Activated CD4-positive, alpha-beta T cell treated with anti-CD3 and anti-CD28 coated beads, Interleukin-2, amount 10 ng/mL, durations not matched to agents 24 days and 14 days (primary cell): ENCODE measurements at regions of chr10 and their contacts with region 1.

Region 1: GRCh38 chr10:62816331-62817120 is at the start of gene EGR2:
- DNase-seq: peak; percentile 98
- H3K4me3 Mint-ChIP-seq: peak within 1 kb of the TSS; percentile 97
- H3K27ac Mint-ChIP-seq: peak within 1 kb of the TSS; percentile 100
- H3K4me1 Mint-ChIP-seq: peaks cover 50% of the 10 kb centered on the region
- H3K27me3 Mint-ChIP-seq: peaks cover 30% of the 10 kb centered on the region
- total RNA-seq, gene EGR2: 178 and 201 TPM in 2 replicates

Region 2: GRCh38 chr10:61943674-61944410 is 872.7 kb before region 1 on chr10:
- intact Hi-C with region 1: loop called (anchors 5 kb)
- DNase-seq: peak; percentile 73
- H3K4me3 Mint-ChIP-seq: peak overlapping the region; percentile 82
- H3K27ac Mint-ChIP-seq: peak overlapping the region; percentile 93
- H3K4me1 Mint-ChIP-seq: peaks cover 49% of the 10 kb centered on the region
- H3K27me3 Mint-ChIP-seq: no peaks in the 10 kb centered on the region

Region 3: GRCh38 chr10:62554632-62555199 is 261.8 kb before region 1 on chr10:
- intact Hi-C with region 1: loop called (anchors 2 kb)
- DNase-seq: peak; percentile 63
- H3K4me3 Mint-ChIP-seq: no peak overlapping the region
- H3K27ac Mint-ChIP-seq: no peak overlapping the region
- H3K4me1 Mint-ChIP-seq: no peaks in the 10 kb centered on the region
- H3K27me3 Mint-ChIP-seq: peaks cover 40% of the 10 kb centered on the region

Region 4: DNA sequence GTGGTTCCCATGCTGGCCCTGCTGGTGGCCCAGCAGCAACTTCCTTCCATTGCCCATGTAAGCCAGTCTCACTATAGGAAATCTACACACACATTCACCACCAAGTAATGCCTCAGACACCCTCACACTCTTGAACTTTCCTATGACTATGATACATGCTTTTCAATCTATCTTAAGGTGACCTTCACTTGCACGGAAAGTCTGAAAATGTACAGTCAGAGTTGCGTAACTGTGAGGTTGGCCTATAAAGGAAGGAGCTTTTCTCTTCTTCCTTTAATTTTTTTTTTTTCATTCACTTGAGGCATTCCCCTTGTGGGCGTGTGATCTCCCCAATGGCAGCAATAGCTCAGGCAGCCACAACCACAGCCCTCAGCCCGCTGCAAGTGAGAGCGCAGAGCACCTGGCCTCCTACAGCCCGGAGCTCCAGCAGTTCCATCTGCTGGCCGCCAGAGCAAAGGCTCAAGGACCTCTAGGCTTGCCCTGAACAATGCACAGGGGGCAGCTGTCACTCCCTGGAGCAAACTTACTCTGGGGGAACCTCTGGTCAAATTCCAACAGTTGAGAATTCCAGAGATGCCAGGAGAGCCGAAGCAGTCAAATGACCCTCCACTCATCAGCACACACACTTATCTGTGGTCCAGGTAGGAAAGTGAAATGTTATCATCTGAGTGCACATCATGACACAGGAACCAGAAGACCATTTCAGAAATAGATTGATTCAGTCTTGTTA is 135.2 kb before region 1 on chr10:
- intact Hi-C with region 1: loop called (anchors 1 kb)
- DNase-seq: peak; percentile 92
- H3K4me3 Mint-ChIP-seq: peak overlapping the region; percentile 31
- H3K27ac Mint-ChIP-seq: peak overlapping the region; percentile 72
- H3K4me1 Mint-ChIP-seq: peaks cover 48% of the 10 kb centered on the region
- H3K27me3 Mint-ChIP-seq: peaks cover 1% of the 10 kb centered on the region

Region 5: GRCh38 chr10:62839590-62839989 is 23.1 kb after region 1 on chr10:
- intact Hi-C with region 1: loop called (anchors 2 kb)
- DNase-seq: no peak
- H3K4me3 Mint-ChIP-seq: no peak overlapping the region
- H3K27ac Mint-ChIP-seq: peak overlapping the region; percentile 60
- H3K4me1 Mint-ChIP-seq: peaks cover 13% of the 10 kb centered on the region
- H3K27me3 Mint-ChIP-seq: peaks cover 27% of the 10 kb centered on the region

Region 6: GRCh38 chr10:62916141-62916603 is 99.6 kb after region 1 on chr10:
- intact Hi-C with region 1: no loop called
- DNase-seq: no peak
- H3K4me3 Mint-ChIP-seq: no peak overlapping the region
- H3K27ac Mint-ChIP-seq: no peak overlapping the region
- H3K4me1 Mint-ChIP-seq: peaks cover 9% of the 10 kb centered on the region
- H3K27me3 Mint-ChIP-seq: peaks cover 14% of the 10 kb centered on the region

Region 7: DNA sequence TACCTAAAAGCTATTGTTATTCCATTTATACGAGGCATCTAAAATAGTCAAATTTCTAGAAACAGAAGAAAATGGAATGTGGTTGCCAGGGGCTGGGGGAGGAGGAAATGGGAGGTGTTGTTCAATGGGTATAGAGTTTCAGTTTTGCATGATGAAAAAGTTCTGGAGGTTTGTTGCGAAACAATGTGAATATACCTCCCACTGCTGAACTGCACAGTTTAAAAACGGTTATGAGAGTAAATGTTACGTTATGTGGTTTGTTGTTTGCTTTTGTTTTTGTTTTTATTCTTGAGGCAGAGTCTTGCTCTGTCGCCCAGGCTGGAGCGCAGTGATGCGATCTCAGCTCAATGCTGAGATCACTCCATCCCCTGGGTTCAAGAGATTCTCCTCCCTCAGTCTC is 251.7 kb after region 1 on chr10:
- intact Hi-C with region 1: loop called (anchors 2 kb)
- DNase-seq: peak; percentile 70
- H3K4me3 Mint-ChIP-seq: peak overlapping the region; percentile 49
- H3K27ac Mint-ChIP-seq: peak overlapping the region; percentile 34
- H3K4me1 Mint-ChIP-seq: peaks cover 38% of the 10 kb centered on the region
- H3K27me3 Mint-ChIP-seq: peaks cover 15% of the 10 kb centered on the region